ENCODE measurements at regions of chr4 and their contacts with region 1.

Region 1: GRCh38 chr4:98601708-98602107 is 56.7 kb downstream of the TSPAN5 start:
- DNase-seq: peak; percentile 58
- ATAC-seq: peak; percentile 77
- H3K4me3 Mint-ChIP-seq: peak overlapping the region; percentile 41
- H3K27ac Mint-ChIP-seq: peak overlapping the region; percentile 92
- H3K4me1 Mint-ChIP-seq: peaks cover 52% of the 10 kb centered on the region
- H3K27me3 Mint-ChIP-seq: no peaks in the 10 kb centered on the region

Region 2: DNA sequence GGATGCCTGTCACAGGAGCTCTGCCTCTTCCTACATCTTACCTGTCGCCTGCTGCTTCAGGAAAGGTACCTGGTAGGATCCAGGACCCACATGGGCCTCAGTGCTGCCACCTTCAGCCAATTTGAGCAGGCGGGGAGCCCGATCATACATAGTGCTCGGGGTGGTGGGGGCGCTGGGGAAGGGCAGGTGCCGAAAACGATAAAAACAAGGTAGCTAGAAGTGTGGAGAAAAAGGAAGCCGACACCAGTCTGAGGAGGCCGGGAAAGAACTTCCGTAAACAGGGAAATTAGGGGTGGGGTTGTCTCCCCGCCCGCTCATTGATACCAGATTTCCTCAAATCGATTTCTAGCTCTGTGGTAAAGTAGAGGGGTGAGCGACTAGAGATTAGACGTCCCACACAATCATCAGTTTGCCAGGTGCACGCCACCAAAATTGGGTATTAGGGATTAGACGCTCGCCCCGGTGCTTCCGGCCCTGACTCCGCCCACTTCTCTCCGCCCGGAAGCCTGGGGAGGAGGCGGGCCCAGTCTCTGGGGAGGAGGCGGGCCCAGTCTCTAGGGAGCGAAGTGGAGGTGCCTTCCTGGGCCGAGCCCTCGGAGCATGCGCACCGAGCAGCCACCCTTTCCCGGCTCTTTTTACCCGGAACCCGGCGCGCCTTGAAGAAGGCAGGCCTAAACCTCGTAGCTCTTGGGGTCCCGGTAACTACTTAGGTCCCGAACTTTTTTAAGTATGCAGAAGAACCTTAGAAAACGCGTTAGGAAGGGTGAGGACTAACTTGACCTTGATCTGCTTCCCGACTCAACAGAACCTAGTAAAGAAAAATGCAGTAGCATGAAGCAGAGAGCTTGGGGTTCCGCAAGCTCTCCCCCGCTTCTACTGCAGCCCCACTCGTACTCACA is 458.5 kb before region 1 on chr4 and contains the start of gene STPG2:
- CTCF ChIA-PET with region 1: no interaction called
- POLR2A ChIA-PET with region 1: interaction called, 3 read pairs
- intact Hi-C with region 1: loop called in 1 of 2 experiments (anchors 2 kb)
- DNase-seq: peak; percentile 96
- ATAC-seq: peak; percentile 100
- H3K4me3 Mint-ChIP-seq: peak within 1 kb of the TSS; percentile 96
- H3K27ac Mint-ChIP-seq: peak within 1 kb of the TSS; percentile 99
- H3K4me1 Mint-ChIP-seq: peaks cover 22% of the 10 kb centered on the region
- H3K27me3 Mint-ChIP-seq: no peaks in the 10 kb centered on the region
- total RNA-seq, gene STPG2: 0.14 to 0.25 TPM

Region 3: DNA sequence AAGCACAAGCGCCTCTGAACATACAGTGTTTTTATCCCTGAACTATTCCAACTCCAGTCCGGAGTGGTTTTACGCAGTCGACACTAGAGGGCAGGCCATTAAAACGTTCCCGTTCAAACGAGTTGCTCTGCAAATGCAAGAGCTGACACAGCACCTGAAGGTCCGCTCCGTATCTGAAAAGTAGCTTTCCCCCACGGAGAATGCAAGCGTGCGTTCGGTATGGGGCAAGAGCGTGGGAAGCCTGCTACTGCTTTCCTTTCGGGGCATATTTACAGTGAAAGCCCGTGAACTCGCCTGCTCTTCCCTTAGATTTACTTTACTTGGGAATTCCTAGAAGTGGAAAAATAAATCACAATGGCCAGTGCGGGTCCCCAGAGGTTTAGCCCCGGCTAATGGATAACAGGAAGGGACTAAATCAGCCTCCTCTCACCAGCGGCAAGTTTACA is 134.1 kb before region 1 on chr4:
- CTCF ChIA-PET with region 1: interaction called, 7 read pairs
- POLR2A ChIA-PET with region 1: no interaction called
- intact Hi-C with region 1: loop called in 1 of 2 experiments (anchors 5 kb)
- DNase-seq: peak; percentile 85
- ATAC-seq: peak; percentile 95
- H3K4me3 Mint-ChIP-seq: peak overlapping the region; percentile 52
- H3K27ac Mint-ChIP-seq: peak overlapping the region; percentile 37
- H3K4me1 Mint-ChIP-seq: peaks cover 23% of the 10 kb centered on the region
- H3K27me3 Mint-ChIP-seq: no peaks in the 10 kb centered on the region

Region 4: DNA sequence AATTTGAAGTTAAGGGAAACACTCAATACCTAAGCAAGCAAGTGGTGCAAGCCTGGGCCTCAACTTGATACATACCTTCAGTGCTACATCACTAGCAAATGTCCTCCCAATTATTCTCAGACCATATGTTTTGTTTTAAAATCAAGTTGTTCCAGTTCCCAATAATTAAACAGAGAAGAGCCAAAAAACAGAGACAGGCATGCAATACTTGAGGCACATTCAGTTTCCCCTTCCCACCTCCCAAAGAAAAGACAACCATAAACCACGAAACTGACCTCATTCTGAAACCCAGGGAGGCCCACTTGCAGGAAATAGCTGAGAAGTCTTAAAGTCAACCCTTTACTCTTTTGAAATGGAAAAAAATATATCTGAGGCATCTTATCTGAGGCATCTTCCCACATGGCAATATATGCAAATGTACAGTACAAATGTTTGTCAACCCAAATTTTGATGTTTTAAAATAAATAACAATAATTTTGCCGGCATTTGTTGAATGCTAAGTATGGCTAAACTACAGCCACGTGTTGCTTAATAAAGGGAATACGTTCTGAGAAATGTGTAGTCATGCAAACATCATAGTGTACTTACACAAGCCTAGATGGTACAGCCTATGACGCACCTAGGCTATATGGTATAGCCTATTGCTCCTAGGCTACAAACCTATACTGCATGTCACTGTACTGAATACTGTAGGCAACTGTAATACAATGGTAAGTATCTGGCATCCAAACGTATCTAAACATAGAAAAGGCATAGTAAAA is 90.8 kb before region 1 on chr4:
- CTCF ChIA-PET with region 1: no interaction called
- POLR2A ChIA-PET with region 1: no interaction called
- intact Hi-C with region 1: loop called (anchors 1 to 2 kb)
- DNase-seq: peak; percentile 65
- ATAC-seq: peak; percentile 88
- H3K4me3 Mint-ChIP-seq: no peak overlapping the region
- H3K27ac Mint-ChIP-seq: peak overlapping the region; percentile 75
- H3K4me1 Mint-ChIP-seq: peaks cover 53% of the 10 kb centered on the region
- H3K27me3 Mint-ChIP-seq: no peaks in the 10 kb centered on the region

Region 5: GRCh38 chr4:98688411-98689290 is 86.9 kb after region 1 on chr4:
- CTCF ChIA-PET with region 1: interaction called, 6 read pairs
- POLR2A ChIA-PET with region 1: interaction called, 4 read pairs
- intact Hi-C with region 1: loop called in 1 of 2 experiments (anchors 1 kb)
- DNase-seq: peak; percentile 51
- ATAC-seq: peak; percentile 90
- H3K4me3 Mint-ChIP-seq: peak overlapping the region; percentile 2
- H3K27ac Mint-ChIP-seq: peak overlapping the region; percentile 67
- H3K4me1 Mint-ChIP-seq: peaks cover 39% of the 10 kb centered on the region
- H3K27me3 Mint-ChIP-seq: no peaks in the 10 kb centered on the region

Region 6: DNA sequence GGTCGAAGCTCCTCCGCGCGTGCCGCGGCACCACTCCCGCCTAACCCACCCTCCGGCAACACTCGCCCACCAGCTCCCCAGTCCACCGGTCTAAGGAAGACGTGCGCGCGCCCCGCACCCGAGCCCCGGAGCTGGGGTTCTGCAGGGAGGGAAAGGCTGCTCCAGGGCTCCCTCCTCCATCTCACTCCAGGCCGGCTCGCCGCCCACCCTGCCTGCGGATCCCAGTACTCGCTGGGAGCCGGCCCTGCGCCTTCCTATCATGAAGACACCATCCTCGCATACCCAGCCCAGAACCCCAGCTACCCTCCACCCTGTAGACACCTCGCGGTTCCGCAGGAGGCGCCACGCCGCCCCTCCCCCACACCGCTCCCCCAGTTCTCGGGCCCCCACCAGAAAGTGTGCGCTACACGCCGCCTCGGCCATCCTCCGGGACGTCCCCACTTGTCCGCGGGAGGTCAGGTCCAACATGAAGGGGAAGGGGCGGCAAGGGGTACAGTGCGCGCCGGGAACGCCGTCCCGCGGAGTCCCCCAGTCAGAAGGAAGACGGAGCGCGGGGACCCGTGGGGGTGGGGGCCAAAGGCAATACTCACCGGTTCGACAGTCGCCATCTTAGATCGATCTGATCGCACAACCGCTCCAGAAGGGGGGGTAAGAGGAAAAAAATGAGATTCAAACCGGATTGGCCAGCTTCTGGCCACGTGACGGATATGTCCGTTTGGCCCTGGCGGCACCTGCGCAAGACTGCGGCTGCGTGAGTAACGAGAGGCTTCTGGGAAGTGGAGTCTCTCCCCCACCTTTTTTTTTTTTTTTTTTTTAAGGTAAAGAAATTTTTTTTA is 327.0 kb after region 1 on chr4 and contains the start of gene EIF4E:
- CTCF ChIA-PET with region 1: no interaction called
- POLR2A ChIA-PET with region 1: no interaction called
- intact Hi-C with region 1: loop called (anchors 1 to 5 kb)
- DNase-seq: peak; percentile 98
- ATAC-seq: peak; percentile 80
- H3K4me3 Mint-ChIP-seq: peak within 1 kb of the TSS; percentile 92
- H3K27ac Mint-ChIP-seq: peak within 1 kb of the TSS; percentile 100
- H3K4me1 Mint-ChIP-seq: peaks cover 47% of the 10 kb centered on the region
- H3K27me3 Mint-ChIP-seq: no peaks in the 10 kb centered on the region
- total RNA-seq, gene EIF4E: 132 to 149 TPM

Region 7: DNA sequence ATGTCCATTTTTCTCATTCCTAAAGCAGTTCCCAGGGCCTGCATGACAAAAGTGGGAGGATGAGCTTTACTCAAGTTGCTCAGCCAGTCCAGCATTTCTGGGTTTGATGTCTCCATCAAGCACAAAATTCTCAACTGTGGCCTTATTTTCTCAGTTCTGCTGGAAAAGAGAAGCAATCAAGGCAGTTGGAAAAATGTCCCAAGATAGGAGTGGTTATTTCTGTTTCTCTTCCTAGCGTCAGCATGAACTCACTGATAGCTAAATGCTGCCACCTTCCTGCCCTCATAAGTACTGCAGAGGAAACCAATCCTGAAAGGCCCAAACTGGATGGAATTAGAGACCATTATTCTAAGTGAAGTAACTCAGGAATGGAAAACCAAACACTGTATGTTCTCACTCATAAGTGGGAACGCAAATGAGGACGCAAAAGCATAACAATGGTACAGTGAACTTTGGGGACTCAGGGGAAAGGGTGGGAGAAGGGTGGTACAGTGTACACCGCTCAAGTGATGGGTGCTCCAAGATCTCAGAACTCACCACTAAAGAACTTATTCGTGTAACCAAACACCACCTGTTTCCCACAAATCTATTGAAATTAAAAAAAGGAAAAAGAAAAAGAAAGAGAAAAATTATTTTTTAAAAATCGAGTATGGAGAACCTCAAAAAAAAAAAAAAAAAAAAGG is 803.9 kb after region 1 on chr4:
- CTCF ChIA-PET with region 1: no interaction called
- POLR2A ChIA-PET with region 1: no interaction called
- intact Hi-C with region 1: loop called in 1 of 2 experiments (anchors 5 kb)
- DNase-seq: peak; percentile 72
- ATAC-seq: peak; percentile 50
- H3K4me3 Mint-ChIP-seq: no peak overlapping the region
- H3K27ac Mint-ChIP-seq: no peak overlapping the region
- H3K4me1 Mint-ChIP-seq: peaks cover 7% of the 10 kb centered on the region
- H3K27me3 Mint-ChIP-seq: peaks cover 1% of the 10 kb centered on the region